ENCODE measurements at regions of chr4 and their contacts with region 1.

Region 1: DNA sequence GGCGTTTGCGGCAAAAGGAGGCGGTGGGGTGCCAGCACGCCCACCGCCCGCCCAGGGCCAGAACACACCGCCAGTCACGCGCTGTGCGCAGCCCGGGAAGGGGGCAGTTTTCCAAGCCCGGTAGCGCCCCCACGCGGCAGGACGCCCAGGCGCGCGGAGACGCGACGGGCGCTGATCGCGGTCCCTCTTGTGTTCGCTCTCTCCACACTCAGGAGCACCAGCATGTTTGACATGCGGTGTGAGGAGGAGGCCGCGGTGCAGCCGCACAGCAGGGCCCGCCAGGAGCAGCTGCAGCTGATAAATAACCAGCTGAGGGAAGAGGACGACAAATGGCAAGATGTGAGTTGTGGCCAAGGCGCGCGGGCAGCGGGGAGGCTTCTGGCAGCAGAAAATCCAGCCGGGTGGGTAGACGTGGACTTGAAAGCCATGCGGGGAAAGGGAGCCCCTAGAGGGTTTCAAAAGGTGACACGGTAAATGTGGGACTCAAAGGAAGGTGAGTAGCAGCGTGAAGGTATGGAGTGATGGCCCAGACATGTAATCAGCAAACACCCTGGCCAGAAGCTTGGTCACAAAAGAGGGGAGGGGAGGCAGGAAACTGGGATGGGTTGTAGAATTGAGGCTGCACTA is 104.1 kb downstream of the PHOX2B start:
- DNase-seq: no peak
- H3K4me3 ChIP-seq: no peak overlapping the region
- H3K27ac ChIP-seq: no peak overlapping the region
- H3K27me3 ChIP-seq: peaks cover 17% of the 10 kb centered on the region
- CTCF ChIP-seq: peak; percentile 57

Region 2: DNA sequence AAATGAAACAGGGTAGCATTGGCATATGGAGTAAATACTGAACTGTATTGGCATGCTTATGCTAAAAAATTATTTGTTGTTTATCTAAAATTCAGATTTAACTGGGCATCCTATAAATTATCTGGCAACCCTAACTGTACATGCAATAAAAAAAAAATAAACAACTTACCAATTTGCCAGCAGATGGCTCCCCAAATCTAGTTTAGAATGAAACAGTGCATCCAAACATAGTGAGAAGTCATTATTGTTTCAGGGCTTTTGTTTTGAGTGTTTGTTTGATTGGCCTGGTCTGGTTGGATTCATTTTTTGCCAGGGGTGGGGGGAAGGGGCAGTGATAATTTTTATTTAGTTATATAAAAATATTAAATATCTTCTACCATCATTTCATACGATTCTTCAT is 907.5 kb before region 1 on chr4:
- CTCF ChIA-PET with region 1: no interaction called
- POLR2A ChIA-PET with region 1: no interaction called
- DNase-seq: no peak
- H3K4me3 ChIP-seq: no peak overlapping the region
- H3K27ac ChIP-seq: no peak overlapping the region
- H3K27me3 ChIP-seq: no peaks in the 10 kb centered on the region
- CTCF ChIP-seq: peak; percentile 43

Region 3: DNA sequence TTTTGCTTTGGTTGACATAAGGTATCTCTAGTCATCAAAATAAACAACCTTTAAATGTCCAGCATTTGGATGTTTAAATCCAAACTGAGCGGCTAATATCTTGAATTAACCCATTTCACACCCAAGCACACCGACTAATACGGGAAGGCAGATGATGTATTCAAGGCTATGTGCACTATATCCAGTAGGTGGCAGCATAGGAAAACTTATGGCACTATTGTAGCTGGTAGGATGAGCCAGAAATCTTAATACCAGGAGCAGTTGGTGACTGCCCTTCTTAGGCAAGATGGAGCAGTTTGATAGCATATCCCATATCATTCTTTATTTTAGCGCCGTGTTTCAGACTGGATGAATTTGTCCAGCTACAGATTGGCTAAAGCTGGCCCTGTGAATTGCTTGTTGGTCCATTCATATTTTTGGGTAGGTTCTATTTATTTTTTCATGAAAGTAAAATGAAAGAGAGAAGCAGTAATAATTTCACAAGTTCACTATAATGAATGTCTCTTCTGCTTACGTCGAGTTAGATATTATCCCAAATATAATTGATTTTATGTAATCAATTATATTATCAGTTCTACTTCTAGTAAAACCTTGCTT is 363.3 kb before region 1 on chr4:
- CTCF ChIA-PET with region 1: interaction called, 98 read pairs
- POLR2A ChIA-PET with region 1: no interaction called
- DNase-seq: no peak
- H3K4me3 ChIP-seq: no peak overlapping the region
- H3K27ac ChIP-seq: no peak overlapping the region
- H3K27me3 ChIP-seq: no peaks in the 10 kb centered on the region
- CTCF ChIP-seq: peak; percentile 91

Region 4: DNA sequence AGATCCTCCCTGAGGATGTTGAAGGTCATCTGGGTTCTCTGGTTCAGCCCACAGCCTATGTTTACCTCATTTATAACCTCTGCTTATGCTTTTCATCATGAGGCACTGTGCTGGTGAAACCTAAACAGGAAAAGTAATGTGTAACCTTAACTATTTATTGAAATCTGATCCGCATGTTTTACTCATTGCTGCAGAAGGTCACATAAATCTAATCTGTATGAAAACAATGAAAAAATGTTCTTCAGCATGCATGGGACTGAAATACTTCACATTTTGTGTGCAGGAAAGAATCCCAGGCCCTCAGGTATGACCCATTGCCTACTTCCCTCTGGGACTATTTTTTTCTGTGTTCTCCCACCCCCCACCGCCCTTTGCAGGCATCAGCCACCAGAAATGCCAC is 357.4 kb before region 1 on chr4:
- CTCF ChIA-PET with region 1: interaction called, 98 read pairs
- POLR2A ChIA-PET with region 1: no interaction called
- DNase-seq: peak; percentile 16
- H3K4me3 ChIP-seq: no peak overlapping the region
- H3K27ac ChIP-seq: no peak overlapping the region
- H3K27me3 ChIP-seq: no peaks in the 10 kb centered on the region
- CTCF ChIP-seq: no peak

Region 5: DNA sequence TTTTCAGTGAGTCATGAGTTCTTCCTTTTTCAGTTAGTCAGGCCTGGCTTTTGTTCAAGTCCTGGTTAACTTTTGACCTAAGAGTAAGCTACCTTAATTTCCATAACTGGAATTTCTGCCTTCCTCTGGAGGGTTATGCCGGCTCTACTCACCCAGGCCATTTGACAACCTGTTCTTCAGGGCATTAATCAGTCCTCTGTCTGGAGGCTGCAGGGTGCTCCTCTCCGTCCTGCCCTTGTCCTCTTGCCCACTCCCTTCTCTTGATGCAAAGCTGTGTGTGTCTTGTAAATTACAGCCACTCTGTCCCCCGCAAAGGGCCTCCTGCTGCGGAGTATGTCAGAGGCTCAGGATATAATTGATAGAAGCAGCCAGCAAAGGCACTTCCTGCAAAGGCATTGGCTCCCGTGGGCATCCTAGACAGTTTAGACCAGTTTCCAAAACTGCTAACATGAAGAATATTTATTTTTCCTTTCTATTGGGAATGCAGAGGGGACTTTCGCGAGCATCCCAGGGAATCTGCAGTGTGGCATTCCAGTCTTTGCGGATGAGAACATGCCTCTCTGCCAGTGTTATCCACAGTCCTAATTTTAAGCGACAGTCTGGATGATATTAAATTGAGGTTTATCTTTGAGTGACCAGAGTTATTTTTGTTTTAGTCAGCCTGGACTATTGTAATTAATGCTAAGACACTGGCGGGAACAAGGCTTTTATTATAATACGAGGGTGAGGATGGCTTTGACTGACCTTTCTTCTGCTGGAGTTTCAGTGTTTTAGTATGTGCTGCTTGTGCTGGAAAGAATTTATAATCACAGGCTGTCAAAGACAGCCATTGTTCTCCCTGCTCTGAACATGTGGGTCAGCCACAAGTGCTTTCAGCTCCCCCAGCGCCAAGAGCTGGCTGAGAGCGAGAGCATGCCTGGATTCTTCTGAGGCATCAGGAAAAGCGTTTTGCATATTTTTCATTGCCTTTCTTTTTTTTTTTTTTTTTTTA is 32.2 kb before region 1 on chr4:
- CTCF ChIA-PET with region 1: interaction called, 10 read pairs
- POLR2A ChIA-PET with region 1: no interaction called
- DNase-seq: no peak
- H3K4me3 ChIP-seq: no peak overlapping the region
- H3K27ac ChIP-seq: no peak overlapping the region
- H3K27me3 ChIP-seq: peaks cover 9% of the 10 kb centered on the region
- CTCF ChIP-seq: no peak

Region 6: DNA sequence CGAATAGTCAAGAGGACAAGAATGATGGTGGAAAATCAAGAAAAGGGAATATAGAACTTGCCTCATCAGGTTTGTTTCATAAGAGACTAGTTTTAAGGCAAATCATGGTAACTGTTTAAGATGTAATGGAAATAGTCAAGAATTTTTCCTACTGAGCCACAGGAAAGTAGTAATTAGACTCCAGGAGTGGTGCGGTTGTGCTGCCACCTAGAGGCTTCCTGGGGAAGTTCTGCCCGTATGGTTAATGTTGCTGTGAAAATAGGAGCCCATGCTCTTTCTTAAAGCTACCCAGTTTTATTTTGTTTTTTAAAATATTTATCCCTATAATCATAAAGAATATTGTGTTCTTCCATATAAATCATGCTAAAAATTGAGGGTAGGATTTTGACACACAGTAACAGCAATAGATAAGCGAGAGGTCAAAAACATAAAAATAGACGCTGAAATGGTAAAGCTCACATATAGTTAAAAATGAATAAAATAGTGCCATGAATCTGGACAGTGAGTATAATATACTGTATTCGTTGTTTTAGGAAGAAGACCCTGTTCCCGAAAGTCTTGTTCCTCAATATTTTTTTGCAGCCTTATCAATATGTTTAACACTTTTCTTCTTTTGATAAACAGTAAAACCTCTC is 17.2 kb after region 1 on chr4:
- CTCF ChIA-PET with region 1: interaction called, 20 read pairs
- POLR2A ChIA-PET with region 1: no interaction called
- DNase-seq: peak; percentile 11
- H3K4me3 ChIP-seq: no peak overlapping the region
- H3K27ac ChIP-seq: no peak overlapping the region
- H3K27me3 ChIP-seq: peaks cover 2% of the 10 kb centered on the region
- CTCF ChIP-seq: peak; percentile 98

Measured in AG04450 (cell line).